Motor neuron (in vitro differentiated cells): ENCODE measurements at regions of chr2 and their contacts with region 1.

Region 1: DNA sequence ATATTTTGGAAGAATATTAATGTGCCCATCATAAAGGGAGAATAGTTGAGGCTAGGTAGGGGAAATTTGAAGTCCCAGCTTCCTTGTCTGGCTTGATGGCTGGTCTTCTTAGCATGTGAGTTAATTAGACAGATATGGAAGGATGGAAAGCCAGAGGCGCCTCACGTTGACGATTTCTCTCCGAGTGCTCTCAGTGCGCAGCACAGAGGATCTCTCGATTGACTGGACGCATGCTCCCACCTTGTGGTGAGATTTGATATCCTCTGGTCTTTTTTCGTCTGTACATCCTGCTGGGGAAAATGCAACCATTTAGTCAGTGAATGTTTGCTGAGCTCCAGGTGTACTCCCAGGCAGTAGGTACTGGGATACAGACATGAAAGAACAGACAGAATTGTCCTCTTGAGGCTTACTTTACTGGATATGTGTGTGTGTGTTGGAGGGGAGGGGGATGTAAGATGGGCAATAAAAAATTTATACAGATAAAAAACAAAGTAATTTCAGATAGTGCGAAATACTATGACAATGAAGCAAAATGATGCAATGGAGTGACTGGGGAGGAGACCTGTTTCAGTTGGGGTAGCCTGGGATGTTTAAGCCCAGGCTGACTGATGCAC is 66.9 kb upstream of the ZNG1B start:
- ATAC-seq: peak; percentile 83 to 99 (median 93)
- H3K4me3 ChIP-seq: no peak overlapping the region
- H3K27ac ChIP-seq: no peak overlapping the region
- H3K4me1 ChIP-seq: no peaks in the 10 kb centered on the region

Region 2: DNA sequence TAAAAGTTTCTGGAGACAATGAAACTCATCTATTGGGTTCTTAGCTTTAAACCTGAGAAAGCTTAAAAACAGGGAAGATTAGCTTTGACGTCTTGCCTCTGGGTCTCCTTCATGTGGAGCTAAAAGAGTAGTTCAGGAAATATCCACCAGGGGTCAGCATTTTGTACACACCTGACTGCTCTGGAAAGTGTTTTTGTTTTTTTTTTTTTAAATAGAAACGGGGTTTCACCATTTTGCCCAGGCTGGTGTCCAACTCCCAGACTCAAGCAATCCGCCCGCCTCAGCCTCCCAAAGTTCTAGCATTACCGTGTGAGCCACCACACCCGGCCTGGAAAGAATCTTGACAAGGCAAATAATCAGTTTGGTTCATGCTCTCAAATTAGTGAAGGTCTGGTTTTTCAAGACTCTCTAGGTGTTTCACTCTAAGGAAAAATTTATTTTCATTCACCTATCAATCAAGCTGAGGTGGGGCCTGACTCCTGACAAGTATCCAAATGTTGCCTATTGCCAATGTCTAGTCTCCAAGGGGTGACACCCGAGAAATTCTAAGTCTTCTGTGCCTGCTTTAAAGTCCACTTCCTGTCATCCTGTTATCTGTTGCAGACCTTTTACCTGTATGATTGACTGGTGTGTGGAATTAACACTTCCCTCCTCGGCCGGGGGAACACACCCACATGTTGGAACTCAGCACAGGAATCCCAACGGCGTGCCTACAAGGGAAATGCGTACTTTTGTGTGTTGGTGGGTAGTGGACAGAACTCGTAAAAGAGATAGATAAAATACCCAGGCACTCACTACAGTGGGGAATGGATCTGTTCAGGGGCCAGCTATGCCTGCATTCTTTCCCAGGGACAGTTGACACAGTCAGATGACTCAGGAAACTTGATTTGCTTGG is 231.9 kb before region 1 on chr2:
- in situ Hi-C with region 1: loop called in 4 of 9 experiments (anchors 25 kb)
- ATAC-seq: peak in 7 of 8 experiments; percentile 30 to 86 (median 53)
- H3K4me3 ChIP-seq: no peak overlapping the region
- H3K27ac ChIP-seq: no peak overlapping the region
- H3K4me1 ChIP-seq: no peaks in the 10 kb centered on the region

Region 3: GRCh38 chr2:113203901-113204519 is 166.6 kb before region 1 on chr2:
- in situ Hi-C with region 1: loop called in 1 of 9 experiments (anchors 25 kb)
- ATAC-seq: peak; percentile 22 to 75 (median 64)
- H3K4me3 ChIP-seq: no peak overlapping the region
- H3K27ac ChIP-seq: no peak overlapping the region
- H3K4me1 ChIP-seq: peaks cover 0 to 7% of the 10 kb centered on the region in 2 donors

Region 4: GRCh38 chr2:113248997-113249770 is 121.4 kb before region 1 on chr2:
- in situ Hi-C with region 1: loop called in 2 of 9 experiments (anchors 25 kb)
- ATAC-seq: peak; percentile 48 to 94 (median 74)
- H3K4me3 ChIP-seq: no peak overlapping the region
- H3K27ac ChIP-seq: no peak overlapping the region
- H3K4me1 ChIP-seq: peaks cover 9 to 26% of the 10 kb centered on the region in 2 donors

Region 5: GRCh38 chr2:113273027-113273551 is 97.5 kb before region 1 on chr2:
- in situ Hi-C with region 1: loop called in 1 of 9 experiments (anchors 25 kb)
- ATAC-seq: peak in 4 of 8 experiments; percentile 27 to 51 (median 42)
- H3K4me3 ChIP-seq: no peak overlapping the region
- H3K27ac ChIP-seq: no peak overlapping the region
- H3K4me1 ChIP-seq: peaks cover 5 to 9% of the 10 kb centered on the region in 2 donors